BJ (cell line): ENCODE measurements at regions of chr11 and their contacts with region 1.

Region 1: DNA sequence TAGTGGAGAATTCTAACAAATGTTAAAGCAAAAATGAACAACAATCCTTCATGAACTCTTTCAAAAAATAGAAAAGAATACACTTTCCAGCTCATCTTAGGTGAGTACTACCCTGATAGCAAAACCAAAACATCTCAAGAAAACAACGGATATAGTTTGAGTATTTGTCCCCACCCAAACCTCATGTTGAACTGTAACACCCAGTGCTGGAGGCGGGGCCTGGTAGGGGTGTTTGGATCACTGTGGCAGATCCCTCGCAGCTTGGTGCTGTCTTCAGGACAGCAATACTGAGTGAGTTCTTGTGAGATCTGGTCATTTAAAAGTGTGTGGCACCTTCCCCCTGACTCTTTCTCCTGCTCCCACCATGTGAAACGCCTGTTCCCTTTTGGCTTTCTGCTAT is 27.0 kb downstream of the NCAPD3 start:
- DNase-seq: no peak
- H3K4me3 ChIP-seq: no peak overlapping the region
- H3K27me3 ChIP-seq: no peaks in the 10 kb centered on the region
- CTCF ChIP-seq: no peak

Region 2: GRCh38 chr11:134207538-134208239 is 10.9 kb after region 1 on chr11:
- CTCF ChIA-PET with region 1: interaction called, 17 read pairs
- POLR2A ChIA-PET with region 1: no interaction called
- DNase-seq: no peak
- H3K4me3 ChIP-seq: no peak overlapping the region
- H3K27me3 ChIP-seq: no peaks in the 10 kb centered on the region
- CTCF ChIP-seq: peak; percentile 67